ENCODE measurements at regions of chr7 and their contacts with region 1.

Region 1: DNA sequence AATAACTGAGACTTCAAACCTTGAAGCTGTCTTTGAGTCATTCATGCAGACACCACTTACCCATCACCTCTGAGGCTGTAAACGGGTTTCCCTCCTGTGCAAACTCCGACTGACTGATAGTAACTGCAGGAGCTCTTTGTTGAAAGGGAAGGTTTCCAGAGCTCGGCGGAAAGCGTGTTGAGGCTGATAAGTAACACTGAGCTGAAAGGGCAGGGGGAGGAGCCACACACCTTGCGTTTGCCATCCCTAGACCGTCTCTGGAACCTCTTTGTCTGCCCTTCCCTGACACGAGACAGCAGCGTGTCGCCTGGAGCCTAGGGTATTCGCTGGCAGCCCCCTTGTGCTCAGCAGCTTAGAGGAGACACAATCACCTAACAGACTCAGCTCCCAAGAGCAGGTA is 134.0 kb downstream of the PAXIP1 start:
- DNase-seq: peak in 1 of 2 donors; percentile 6
- H3K4me3 ChIP-seq: no peak overlapping the region
- H3K27ac ChIP-seq: no peak overlapping the region
- H3K4me1 ChIP-seq: no peaks in the 10 kb centered on the region
- H3K27me3 ChIP-seq: peaks cover 0 to 21% of the 10 kb centered on the region in 2 donors
- CTCF ChIP-seq: no peak
- POLR2A ChIP-seq: no peak

Region 2: GRCh38 chr7:154848464-154848863 is 20.5 kb before region 1 on chr7:
- intact Hi-C with region 1: loop called (anchors 1 kb)
- DNase-seq: no peak
- H3K4me3 ChIP-seq: no peak overlapping the region
- H3K27ac ChIP-seq: no peak overlapping the region
- H3K4me1 ChIP-seq: no peaks in the 10 kb centered on the region
- H3K27me3 ChIP-seq: no peaks in the 10 kb centered on the region
- CTCF ChIP-seq: no peak
- POLR2A ChIP-seq: no peak

Region 3: DNA sequence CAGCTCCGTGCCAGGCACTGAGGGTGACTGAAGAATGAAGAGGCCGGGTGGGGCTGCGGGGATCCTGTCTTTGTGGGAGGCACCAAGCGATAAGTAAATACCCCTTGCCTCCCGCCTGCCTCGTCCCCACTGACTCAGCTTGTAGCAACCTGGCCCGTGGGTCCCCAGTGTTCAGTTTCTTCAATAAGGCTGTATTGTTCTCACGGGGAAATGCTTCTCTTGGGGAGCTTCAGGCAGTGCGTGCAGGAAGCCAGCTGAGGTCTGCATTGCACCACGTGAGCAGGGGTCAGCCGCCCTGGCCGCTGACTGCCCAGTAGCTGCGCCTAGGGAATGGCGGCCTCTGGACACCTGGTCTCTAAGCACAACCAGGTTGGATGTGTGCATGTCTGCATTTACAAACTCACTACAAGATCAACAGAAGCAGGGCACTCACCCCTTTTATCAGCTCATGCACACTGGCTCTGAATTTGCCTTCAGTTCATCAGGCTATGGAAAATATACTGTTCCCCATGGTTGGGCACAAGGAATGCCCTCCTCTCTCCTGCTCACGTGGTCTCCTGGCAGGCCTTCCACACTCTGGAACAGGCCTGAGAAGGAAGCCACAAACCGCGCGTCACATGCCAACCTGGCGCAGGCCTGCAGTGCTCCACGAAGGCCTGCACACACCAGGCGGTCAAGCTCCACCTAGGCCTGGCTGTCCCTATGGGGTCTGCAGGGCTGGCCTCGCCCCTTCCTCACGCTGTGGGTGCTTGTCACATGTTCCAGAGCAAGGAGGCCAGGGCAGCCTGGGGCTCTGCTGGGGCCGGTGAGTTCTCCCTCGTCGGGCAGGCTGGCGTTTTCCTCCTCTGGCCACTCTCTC is 1636.0 kb after region 1 on chr7:
- intact Hi-C with region 1: loop called (anchors 5 kb)
- DNase-seq: no peak
- H3K4me3 ChIP-seq: no peak overlapping the region
- H3K27ac ChIP-seq: no peak overlapping the region
- H3K4me1 ChIP-seq: no peaks in the 10 kb centered on the region
- H3K27me3 ChIP-seq: no peaks in the 10 kb centered on the region
- CTCF ChIP-seq: no peak
- POLR2A ChIP-seq: no peak

Measured in breast epithelium (tissue), 4 donors.